ENCODE measurements at regions of chr17 and their contacts with region 1.

Region 1: DNA sequence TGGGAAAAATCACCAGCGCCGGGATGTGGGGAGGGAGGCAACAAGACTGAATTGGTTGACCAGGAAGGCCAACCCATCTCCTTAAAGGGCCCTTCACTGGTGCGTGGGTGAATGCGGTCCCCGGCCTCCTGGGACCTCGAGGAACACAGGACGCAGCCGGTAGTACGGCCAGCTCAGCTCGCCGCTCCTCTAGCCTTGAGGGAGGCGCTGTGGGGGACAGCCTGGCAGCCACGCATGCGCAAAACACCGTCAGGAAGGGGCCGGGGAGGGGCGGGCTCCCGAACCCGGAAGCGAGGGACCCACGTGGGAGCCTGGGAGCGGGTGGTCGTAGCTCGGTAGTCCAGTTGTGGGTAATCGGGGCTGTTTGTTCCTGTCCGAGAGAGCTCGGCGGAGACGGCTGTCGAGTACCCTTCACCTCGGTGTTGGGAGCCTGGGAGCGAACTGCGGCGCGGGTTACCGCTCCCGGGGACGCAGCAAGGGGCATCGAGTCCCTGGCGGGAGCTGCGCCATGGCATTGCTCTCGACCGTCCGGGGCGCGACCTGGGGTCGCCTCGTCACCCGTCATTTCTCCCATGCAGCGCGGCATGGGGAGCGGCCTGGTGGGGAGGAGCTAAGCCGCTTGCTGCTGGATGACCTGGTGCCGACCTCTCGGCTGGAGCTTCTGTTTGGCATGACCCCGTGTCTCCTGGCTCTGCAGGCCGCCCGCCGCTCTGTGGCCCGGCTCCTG is at the start of gene MRM1:
- DNase-seq: peak; percentile 93
- H3K4me3 ChIP-seq: peak within 1 kb of the TSS; percentile 34 to 67 (median 63)
- H3K27ac ChIP-seq: peak within 1 kb of the TSS; percentile 54
- H3K4me1 ChIP-seq: peaks cover 16% of the 10 kb centered on the region
- H3K27me3 ChIP-seq: no peaks in the 10 kb centered on the region
- CTCF ChIP-seq: peak in 1 of 2 donors; percentile 27
- POLR2A ChIP-seq: peak; percentile 98
- total RNA-seq, gene MRM1: 5.2 and 5.9 TPM in 2 replicates

Region 2: GRCh38 chr17:36553459-36553858 is 48.0 kb before region 1 on chr17:
- CTCF ChIA-PET with region 1: no interaction called
- POLR2A ChIA-PET with region 1: no interaction called
- dilution Hi-C with region 1: no loop called
- intact Hi-C with region 1: no loop called
- DNase-seq: no peak
- H3K4me3 ChIP-seq: no peak overlapping the region
- H3K27ac ChIP-seq: no peak overlapping the region
- H3K4me1 ChIP-seq: peaks cover 3% of the 10 kb centered on the region
- H3K27me3 ChIP-seq: no peaks in the 10 kb centered on the region
- CTCF ChIP-seq: no peak
- POLR2A ChIP-seq: no peak

Region 3: DNA sequence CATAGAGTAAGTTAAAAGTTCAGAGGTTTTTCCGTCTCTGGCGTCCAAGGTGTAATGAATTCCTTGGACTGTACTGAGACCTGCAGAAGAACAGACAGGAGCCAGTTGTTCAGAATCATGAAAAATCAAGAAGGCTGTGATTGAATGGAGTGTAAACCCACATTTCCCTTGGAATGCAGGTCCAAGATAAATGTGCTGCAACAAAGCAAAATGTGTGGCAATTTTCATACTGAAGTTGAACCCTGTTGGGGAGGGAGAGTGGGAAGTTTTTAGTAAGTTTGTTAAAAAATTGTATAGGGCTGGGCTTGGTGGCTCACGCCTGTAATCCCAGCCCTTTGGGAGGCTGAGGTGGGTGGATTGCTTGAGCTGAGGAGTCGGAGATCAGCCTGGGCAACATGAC is 35.4 kb before region 1 on chr17:
- CTCF ChIA-PET with region 1: no interaction called
- POLR2A ChIA-PET with region 1: no interaction called
- dilution Hi-C with region 1: no loop called
- intact Hi-C with region 1: no loop called
- DNase-seq: no peak
- H3K4me3 ChIP-seq: no peak overlapping the region
- H3K27ac ChIP-seq: no peak overlapping the region
- H3K4me1 ChIP-seq: no peaks in the 10 kb centered on the region
- H3K27me3 ChIP-seq: no peaks in the 10 kb centered on the region
- CTCF ChIP-seq: no peak
- POLR2A ChIP-seq: no peak

Region 4: GRCh38 chr17:36705874-36706731 is 104.6 kb after region 1 on chr17:
- CTCF ChIA-PET with region 1: interaction called, 8 read pairs
- POLR2A ChIA-PET with region 1: no interaction called
- dilution Hi-C with region 1: no loop called
- intact Hi-C with region 1: loop called (anchors 10 kb)
- DNase-seq: peak; percentile 10
- H3K4me3 ChIP-seq: no peak overlapping the region
- H3K27ac ChIP-seq: no peak overlapping the region
- H3K4me1 ChIP-seq: no peaks in the 10 kb centered on the region
- H3K27me3 ChIP-seq: peaks cover 2 to 11% of the 10 kb centered on the region in 2 experiments
- CTCF ChIP-seq: peak; percentile 59 to 68
- POLR2A ChIP-seq: no peak

Region 5: GRCh38 chr17:36717088-36717487 is 115.6 kb after region 1 on chr17:
- CTCF ChIA-PET with region 1: no interaction called
- POLR2A ChIA-PET with region 1: no interaction called
- dilution Hi-C with region 1: no loop called
- intact Hi-C with region 1: no loop called
- DNase-seq: no peak
- H3K4me3 ChIP-seq: no peak overlapping the region
- H3K27ac ChIP-seq: no peak overlapping the region
- H3K4me1 ChIP-seq: peaks cover 4% of the 10 kb centered on the region
- H3K27me3 ChIP-seq: peaks cover 0 to 4% of the 10 kb centered on the region in 2 experiments
- CTCF ChIP-seq: no peak
- POLR2A ChIP-seq: no peak

Region 6: DNA sequence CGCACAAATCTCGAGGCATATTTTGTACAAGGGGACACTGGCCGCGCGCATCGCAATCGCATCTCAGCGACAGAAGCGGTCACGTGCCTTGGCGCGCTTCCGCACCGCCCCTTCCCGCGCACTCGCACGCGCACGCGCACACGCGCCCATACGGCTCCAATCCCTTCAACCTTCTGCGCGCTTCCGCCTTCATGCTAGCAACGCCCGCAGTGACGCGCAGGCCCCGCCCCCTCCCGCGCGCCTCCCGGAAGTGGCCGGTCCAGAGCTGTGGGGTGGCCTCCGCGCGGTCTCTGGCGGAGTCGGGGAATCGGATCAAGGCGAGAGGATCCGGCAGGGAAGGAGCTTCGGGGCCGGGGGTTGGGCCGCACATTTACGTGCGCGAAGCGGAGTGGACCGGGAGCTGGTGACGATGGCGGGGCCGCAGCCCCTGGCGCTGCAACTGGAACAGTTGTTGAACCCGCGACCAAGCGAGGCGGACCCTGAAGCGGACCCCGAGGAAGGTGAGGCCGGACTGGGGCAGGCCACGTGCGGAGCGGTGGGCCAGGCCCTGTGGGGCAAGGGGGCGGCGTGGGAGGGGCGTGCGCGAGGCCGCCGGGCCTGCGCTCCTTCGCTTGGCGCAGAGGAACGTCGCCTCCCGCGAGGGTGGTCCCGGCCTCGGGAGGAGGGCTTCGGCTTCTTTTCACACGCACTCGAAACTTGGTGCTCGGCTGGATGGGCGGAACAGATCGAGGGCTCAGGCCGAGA is 347.4 kb after region 1 on chr17 and contains the start of gene AATF:
- CTCF ChIA-PET with region 1: interaction called, 3 read pairs
- POLR2A ChIA-PET with region 1: no interaction called
- dilution Hi-C with region 1: no loop called
- intact Hi-C with region 1: loop called (anchors 5 kb)
- DNase-seq: peak; percentile 97
- H3K4me3 ChIP-seq: peak within 1 kb of the TSS; percentile 43 to 83 (median 69)
- H3K27ac ChIP-seq: peak within 1 kb of the TSS; percentile 27
- H3K4me1 ChIP-seq: peaks cover 14% of the 10 kb centered on the region
- H3K27me3 ChIP-seq: peaks cover 36 to 44% of the 10 kb centered on the region in 2 experiments
- CTCF ChIP-seq: no peak
- POLR2A ChIP-seq: peak; percentile 56
- total RNA-seq, gene AATF: 44.8 and 47.2 TPM in 2 replicates

Region 7: GRCh38 chr17:37212179-37212578 is 610.7 kb after region 1 on chr17:
- CTCF ChIA-PET with region 1: interaction called, 11 read pairs
- POLR2A ChIA-PET with region 1: no interaction called
- dilution Hi-C with region 1: no loop called
- intact Hi-C with region 1: no loop called
- DNase-seq: peak; percentile 13
- H3K4me3 ChIP-seq: no peak overlapping the region
- H3K27ac ChIP-seq: no peak overlapping the region
- H3K4me1 ChIP-seq: no peaks in the 10 kb centered on the region
- H3K27me3 ChIP-seq: no peaks in the 10 kb centered on the region
- CTCF ChIP-seq: peak; percentile 3 to 34
- POLR2A ChIP-seq: no peak

Measured in endothelial cell of umbilical vein (primary cell).